Caco-2 (cell line): ENCODE measurements at regions of chr9 and their contacts with region 1.

Region 1: DNA sequence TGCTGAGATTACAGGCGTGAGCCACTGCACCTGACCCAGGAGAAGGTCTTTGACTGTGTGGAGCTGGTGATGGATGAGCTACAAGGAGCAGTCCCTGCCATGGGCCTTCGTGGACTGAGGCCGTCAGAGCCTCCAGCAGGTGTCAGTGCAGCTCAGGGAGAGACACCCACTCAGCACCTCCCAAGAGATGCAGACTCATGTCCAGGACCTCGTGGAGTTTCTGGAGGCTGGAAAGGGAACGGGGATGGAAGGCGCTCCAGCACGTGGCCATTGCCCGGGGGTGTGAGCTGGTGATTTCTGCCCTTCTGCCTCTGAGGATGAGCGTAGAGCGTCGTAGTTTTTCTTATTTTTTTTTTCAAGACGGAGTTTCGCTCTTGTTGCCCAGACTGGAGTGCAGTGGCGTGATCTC is 9.5 kb downstream of the TOR4A start:
- DNase-seq: peak; percentile 83 to 89
- H3K4me3 ChIP-seq: no peak overlapping the region
- H3K4me3 Mint-ChIP-seq: no peak overlapping the region
- H3K27ac Mint-ChIP-seq: peak overlapping the region; percentile 9
- H3K4me1 ChIP-seq: no peaks in the 10 kb centered on the region
- H3K4me1 Mint-ChIP-seq: no peaks in the 10 kb centered on the region
- H3K27me3 ChIP-seq: no peaks in the 10 kb centered on the region
- H3K27me3 Mint-ChIP-seq: no peaks in the 10 kb centered on the region
- CTCF ChIP-seq: peak; percentile 75 to 84

Region 2: DNA sequence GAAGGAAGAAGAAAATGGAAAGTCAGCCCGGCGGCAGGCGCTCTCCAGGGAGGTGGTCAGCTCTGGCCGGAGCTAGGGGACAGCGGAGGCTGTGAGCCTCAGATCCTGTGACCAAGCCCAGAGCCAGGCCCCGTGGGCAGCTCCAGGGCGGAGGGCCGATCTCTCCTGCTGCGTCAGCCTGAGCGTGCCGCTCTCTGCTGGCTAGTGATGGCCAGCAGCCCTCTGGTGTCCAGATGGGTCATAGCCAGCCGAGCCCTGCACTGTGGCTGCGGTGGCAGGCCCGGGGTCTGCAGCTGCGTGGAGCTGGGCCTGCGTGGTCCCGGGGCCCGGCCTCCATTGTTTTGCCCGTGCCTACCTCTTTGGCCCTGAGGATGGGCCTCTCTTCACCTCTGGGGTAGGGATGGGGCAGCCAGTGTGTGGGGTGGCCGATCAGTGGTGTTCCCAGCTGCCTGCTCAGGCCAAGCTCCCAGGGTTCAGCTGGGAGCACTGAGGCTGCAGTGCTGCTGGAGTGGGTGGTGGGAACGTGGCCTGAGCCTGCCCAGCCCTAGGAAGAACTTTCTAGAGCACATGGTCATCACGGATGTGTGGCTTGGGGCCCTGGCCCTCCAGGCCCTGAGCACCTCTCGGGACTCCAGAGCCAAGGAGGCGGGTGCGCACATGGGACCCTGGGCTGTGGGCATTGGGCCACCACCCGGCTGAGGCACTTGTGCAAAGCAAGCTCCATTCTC is 32.2 kb after region 1 on chr9:
- CTCF ChIA-PET with region 1: interaction called, 11 read pairs
- POLR2A ChIA-PET with region 1: no interaction called
- intact Hi-C with region 1: no loop called
- DNase-seq: peak; percentile 53 to 54
- H3K4me3 ChIP-seq: no peak overlapping the region
- H3K4me3 Mint-ChIP-seq: no peak overlapping the region
- H3K27ac Mint-ChIP-seq: no peak overlapping the region
- H3K4me1 ChIP-seq: peaks cover 19% of the 10 kb centered on the region
- H3K4me1 Mint-ChIP-seq: no peaks in the 10 kb centered on the region
- H3K27me3 ChIP-seq: no peaks in the 10 kb centered on the region
- H3K27me3 Mint-ChIP-seq: no peaks in the 10 kb centered on the region
- CTCF ChIP-seq: peak; percentile 30 to 56

Region 3: GRCh38 chr9:137406876-137407589 is 120.1 kb after region 1 on chr9:
- CTCF ChIA-PET with region 1: interaction called, 3 read pairs
- POLR2A ChIA-PET with region 1: no interaction called
- intact Hi-C with region 1: loop called (anchors 1 kb)
- DNase-seq: peak in 1 of 2 experiments; percentile 53
- H3K4me3 ChIP-seq: peak overlapping the region; percentile 19; the same call in 1 of the 2 replicates
- H3K4me3 Mint-ChIP-seq: no peak overlapping the region
- H3K27ac Mint-ChIP-seq: no peak overlapping the region
- H3K4me1 ChIP-seq: no peaks in the 10 kb centered on the region
- H3K4me1 Mint-ChIP-seq: no peaks in the 10 kb centered on the region
- H3K27me3 ChIP-seq: no peaks in the 10 kb centered on the region
- H3K27me3 Mint-ChIP-seq: no peaks in the 10 kb centered on the region
- CTCF ChIP-seq: peak; percentile 22 to 38